MCF 10A (cell line): ENCODE measurements at regions of chr10 and their contacts with region 1.

Region 1: DNA sequence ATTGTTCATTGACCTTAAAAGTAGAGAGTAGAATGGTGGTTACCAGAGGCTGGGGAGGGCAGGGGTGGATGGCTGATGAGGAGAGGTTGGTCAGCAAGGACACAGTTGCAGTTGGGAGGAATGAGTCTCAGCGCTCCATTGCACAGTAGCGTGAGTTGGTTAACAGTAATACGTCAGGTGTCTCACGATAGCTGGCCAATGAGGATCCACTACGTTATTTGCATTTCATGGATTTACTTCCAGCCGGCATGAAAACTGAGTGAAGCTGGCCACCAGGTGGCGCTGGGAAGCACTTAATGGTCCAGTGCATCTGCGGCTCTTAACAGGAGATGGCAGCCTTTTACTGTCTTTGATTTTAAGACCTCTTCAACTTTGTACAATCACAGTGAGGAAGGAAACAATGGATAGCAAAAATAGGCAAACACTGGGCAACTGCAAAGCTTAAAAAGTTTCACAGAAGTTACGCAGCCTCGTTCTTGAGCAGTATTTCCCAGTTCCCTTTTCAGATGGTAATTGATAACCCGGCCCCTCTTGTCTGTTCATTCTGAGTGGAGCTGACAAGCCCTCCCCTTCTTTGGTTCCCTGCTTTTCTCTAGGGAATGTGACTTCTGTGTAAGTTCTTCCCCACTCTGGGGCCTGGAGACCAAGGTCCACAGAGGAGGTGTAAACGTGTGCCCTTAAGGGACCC is 23.7 kb downstream of the AKR1E2 start:
- DNase-seq: peak; percentile 95
- H3K4me3 Mint-ChIP-seq: no peak overlapping the region
- H3K27ac Mint-ChIP-seq: peak overlapping the region; percentile 49
- H3K4me1 Mint-ChIP-seq: peaks cover 29% of the 10 kb centered on the region
- H3K27me3 Mint-ChIP-seq: no peaks in the 10 kb centered on the region
- CTCF ChIP-seq: peak; percentile 99

Region 2: GRCh38 chr10:4214908-4215307 is 634.8 kb before region 1 on chr10:
- CTCF ChIA-PET with region 1: no interaction called
- POLR2A ChIA-PET with region 1: no interaction called
- intact Hi-C with region 1: no loop called
- DNase-seq: no peak
- H3K4me3 Mint-ChIP-seq: no peak overlapping the region
- H3K27ac Mint-ChIP-seq: no peak overlapping the region
- H3K4me1 Mint-ChIP-seq: no peaks in the 10 kb centered on the region
- H3K27me3 Mint-ChIP-seq: no peaks in the 10 kb centered on the region
- CTCF ChIP-seq: no peak

Region 3: DNA sequence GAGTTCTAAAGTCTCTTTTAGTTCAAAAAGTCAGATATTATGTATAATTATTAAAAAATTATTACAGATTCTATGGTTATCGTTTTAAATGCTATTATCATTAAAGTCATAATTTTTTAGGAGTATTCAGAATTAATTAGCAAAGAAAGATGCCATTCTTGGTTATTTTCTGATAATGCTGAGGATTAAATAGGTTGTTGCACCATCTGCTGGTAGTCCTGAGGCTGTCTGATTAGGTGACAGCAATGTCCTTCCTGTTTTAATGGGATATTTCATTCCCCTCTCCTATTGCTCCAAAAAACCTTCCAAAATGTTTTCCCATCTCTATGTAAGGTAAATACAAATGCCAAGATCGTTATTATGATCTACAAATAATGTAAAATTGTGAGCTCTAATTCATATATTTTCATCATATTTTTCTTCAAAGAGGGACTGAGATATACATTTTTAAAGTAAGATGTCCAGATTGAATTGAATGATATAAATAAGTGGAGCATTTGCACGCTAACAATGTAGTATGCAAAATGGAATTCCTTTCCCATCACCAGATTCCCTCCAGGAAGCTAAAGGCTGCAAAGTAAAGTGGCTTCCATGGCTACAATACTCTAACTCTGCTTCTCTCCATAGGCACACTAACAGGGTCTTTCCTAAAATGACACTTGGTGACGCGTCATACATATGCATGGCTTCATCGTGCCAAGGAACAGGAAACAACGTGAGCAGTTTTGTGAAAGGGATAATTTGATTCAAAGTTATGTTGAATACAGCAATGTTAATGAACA is 82.5 kb before region 1 on chr10:
- CTCF ChIA-PET with region 1: no interaction called
- POLR2A ChIA-PET with region 1: no interaction called
- intact Hi-C with region 1: no loop called
- DNase-seq: peak; percentile 57
- H3K4me3 Mint-ChIP-seq: no peak overlapping the region
- H3K27ac Mint-ChIP-seq: peak overlapping the region; percentile 76
- H3K4me1 Mint-ChIP-seq: peaks cover 31% of the 10 kb centered on the region
- H3K27me3 Mint-ChIP-seq: no peaks in the 10 kb centered on the region
- CTCF ChIP-seq: peak; percentile 78

Region 4: GRCh38 chr10:4813023-4813422 is 36.7 kb before region 1 on chr10:
- CTCF ChIA-PET with region 1: interaction called, 21 read pairs
- POLR2A ChIA-PET with region 1: interaction called, 3 read pairs
- intact Hi-C with region 1: loop called (anchors 2 kb)
- DNase-seq: peak; percentile 76
- H3K4me3 Mint-ChIP-seq: no peak overlapping the region
- H3K27ac Mint-ChIP-seq: no peak overlapping the region
- H3K4me1 Mint-ChIP-seq: peaks cover 18% of the 10 kb centered on the region
- H3K27me3 Mint-ChIP-seq: no peaks in the 10 kb centered on the region
- CTCF ChIP-seq: no peak

Region 5: GRCh38 chr10:4867520-4868356 is 18.0 kb after region 1 on chr10:
- CTCF ChIA-PET with region 1: interaction called, 21 read pairs
- POLR2A ChIA-PET with region 1: interaction called, 3 read pairs
- intact Hi-C with region 1: no loop called
- DNase-seq: no peak
- H3K4me3 Mint-ChIP-seq: no peak overlapping the region
- H3K27ac Mint-ChIP-seq: no peak overlapping the region
- H3K4me1 Mint-ChIP-seq: peaks cover 6% of the 10 kb centered on the region
- H3K27me3 Mint-ChIP-seq: no peaks in the 10 kb centered on the region
- CTCF ChIP-seq: no peak

Region 6: DNA sequence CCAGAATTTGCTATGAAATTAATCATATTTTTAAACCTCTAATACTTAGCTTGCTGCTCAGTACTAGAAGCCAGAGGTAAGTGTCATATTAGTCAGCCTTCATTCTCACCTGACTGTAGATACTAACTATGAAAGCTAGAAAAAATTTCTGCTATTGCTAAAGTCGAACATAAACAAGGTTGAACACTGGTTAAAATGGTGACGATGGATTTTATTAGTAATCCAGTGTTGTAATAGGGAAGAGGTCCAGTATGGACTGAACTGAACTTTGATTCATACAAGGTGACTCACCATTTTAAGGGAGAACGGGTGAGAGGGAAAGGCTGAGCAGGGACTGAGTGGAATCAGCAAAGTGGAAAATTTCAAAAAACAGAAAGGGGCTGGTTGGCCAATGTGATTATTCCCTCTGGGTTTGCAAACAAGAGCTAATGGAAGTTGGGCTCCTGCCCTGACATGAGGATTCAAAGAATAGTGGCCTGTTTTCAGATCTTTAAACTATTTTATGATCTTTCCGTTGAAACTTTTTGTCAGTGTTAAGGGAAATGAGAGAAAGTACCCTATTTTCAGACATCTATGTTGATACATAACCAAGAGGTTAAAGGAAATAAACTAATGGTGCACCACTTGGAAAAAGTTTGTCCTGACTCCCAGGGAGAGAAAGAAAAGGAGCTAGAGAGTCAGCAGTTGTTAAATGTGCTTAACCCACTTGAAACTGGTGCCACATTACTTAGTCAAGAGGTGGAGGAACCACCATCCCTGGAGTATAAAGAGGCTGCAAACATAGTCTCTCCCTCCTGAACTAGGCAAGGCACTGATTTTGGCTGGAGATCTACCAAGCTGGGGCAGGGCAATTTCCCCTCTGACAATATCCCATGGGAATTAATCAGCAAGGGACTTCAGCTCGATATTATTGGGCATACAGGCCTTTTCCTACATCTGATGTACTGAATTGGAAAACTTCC is 98.2 kb after region 1 on chr10:
- CTCF ChIA-PET with region 1: interaction called, 17 read pairs
- POLR2A ChIA-PET with region 1: interaction called, 6 read pairs
- intact Hi-C with region 1: loop called (anchors 2 kb)
- DNase-seq: peak; percentile 96
- H3K4me3 Mint-ChIP-seq: no peak overlapping the region
- H3K27ac Mint-ChIP-seq: peak overlapping the region; percentile 72
- H3K4me1 Mint-ChIP-seq: peaks cover 49% of the 10 kb centered on the region
- H3K27me3 Mint-ChIP-seq: no peaks in the 10 kb centered on the region
- CTCF ChIP-seq: no peak

Region 7: DNA sequence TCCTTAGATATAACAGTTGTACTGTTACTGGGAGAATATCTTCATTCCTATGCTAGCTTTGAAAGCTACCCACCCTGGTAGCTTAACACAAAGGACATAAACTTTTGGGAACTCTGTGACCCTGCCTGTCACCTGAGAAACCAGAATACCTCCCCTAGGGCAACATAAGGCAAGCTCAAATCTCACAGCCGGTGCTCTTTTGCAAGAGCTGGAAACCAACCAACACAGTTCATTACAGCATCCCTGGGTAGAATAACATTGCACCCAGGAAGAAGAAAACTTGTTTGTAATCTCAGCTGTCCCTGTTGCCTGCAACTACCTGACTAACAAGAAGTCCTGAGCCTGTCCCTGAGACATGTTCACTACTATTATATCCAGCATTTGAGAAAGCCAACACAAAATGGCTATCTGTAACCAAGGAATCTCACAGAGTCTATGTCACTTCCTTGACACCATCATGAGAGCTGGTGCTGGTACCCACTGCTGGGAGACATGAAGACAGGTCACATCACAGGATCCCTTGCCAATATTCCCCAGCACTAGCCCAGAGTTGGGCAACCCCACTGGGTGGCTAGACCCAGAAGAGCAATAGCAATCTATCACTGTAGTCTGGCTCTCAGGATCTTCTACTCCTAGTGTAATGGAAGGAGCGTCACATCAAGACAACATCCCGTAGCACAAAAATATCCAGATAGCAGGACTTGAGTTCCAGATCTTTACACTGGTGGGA is 275.8 kb after region 1 on chr10:
- CTCF ChIA-PET with region 1: interaction called, 10 read pairs
- POLR2A ChIA-PET with region 1: no interaction called
- intact Hi-C with region 1: no loop called
- DNase-seq: peak; percentile 78
- H3K4me3 Mint-ChIP-seq: no peak overlapping the region
- H3K27ac Mint-ChIP-seq: peak overlapping the region; percentile 55
- H3K4me1 Mint-ChIP-seq: peaks cover 6% of the 10 kb centered on the region
- H3K27me3 Mint-ChIP-seq: no peaks in the 10 kb centered on the region
- CTCF ChIP-seq: no peak

Region 8: DNA sequence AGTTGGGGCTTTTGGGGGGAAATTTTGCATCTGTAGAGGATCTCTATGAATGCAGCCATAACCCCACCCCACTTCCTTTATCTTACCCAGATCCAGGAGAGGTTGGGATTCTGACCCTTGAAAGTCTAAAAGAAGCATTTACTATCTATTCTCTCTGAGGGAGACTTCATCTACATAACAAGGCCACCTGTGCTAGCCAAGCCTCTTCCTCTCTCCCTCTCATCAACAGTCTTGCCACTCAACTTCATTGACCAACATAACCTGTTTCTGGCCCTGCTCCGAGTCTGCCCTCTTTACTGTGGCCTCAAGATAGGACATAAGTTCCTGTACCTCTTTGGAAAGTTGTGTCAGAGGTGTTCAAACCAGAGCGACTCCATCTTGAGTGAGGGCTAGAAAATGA is 535.5 kb after region 1 on chr10:
- CTCF ChIA-PET with region 1: interaction called, 16 read pairs
- POLR2A ChIA-PET with region 1: no interaction called
- intact Hi-C with region 1: loop called (anchors 1 kb)
- DNase-seq: no peak
- H3K4me3 Mint-ChIP-seq: no peak overlapping the region
- H3K27ac Mint-ChIP-seq: no peak overlapping the region
- H3K4me1 Mint-ChIP-seq: no peaks in the 10 kb centered on the region
- H3K27me3 Mint-ChIP-seq: no peaks in the 10 kb centered on the region
- CTCF ChIP-seq: no peak